HEK293 (cell line): ENCODE measurements at regions of chr19 and their contacts with region 1.

Region 1: DNA sequence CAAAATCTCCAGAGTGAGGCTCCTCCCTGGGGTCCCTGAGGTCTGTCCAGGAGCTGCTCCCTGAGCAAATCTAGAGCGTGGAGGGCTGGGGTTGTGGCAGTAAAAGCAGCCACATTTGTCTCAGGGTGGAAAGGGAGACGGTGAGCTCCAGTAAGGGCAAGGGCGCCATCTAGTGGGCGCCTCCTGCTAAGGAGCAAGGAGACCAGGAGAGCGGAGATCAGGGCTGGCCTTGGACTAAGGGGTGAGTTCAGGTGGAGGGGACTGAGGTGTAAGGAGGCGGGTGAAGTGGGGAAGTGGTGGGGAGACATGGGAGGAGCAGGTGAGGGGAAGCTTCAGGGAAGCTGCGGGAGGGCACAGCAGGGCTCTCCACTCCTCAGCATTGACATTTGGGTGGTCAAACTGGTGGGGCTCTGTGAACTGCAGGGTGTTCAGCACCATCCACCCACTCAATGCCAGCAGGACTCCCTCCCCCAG is 5.3 kb upstream of the CEACAM21 start:
- H3K4me3 ChIP-seq: no peak overlapping the region
- H3K27ac ChIP-seq: no peak overlapping the region
- H3K4me1 ChIP-seq: peaks cover 3% of the 10 kb centered on the region
- CTCF ChIP-seq: peak; percentile 99

Region 2: DNA sequence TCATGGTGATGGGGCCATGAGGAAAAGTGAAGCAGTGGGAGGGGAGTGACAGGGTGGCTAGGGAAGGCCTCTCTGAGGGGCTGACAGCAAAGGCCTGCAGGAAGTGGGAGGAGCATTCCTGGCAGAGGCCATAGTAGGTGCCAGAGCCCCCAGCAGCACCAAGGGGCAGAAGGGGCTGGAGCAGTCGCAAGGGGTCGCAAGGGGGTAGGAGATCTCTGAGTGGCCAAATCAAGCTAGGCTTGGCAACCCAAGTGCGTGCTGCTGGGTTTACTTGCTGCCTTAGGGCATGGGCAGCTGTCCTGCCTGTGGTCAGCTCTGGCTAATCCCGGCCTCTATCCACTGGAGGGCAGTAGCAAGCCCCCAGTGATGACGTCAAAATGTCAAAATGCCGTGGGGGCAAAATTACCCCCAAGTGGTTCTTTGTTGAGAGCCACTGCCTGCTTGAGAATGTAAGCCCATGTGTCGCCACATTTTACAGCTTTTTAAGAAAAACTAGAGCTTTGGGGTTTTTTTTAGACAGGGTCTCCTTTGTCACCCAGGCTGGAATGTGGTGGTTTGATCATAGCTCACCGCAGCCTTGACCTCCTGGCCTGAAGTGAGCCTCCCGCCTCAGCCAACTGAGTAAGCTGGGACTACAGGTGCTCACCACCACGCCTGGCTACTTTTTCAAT is 248.9 kb before region 1 on chr19:
- CTCF ChIA-PET with region 1: interaction called, 14 read pairs
- POLR2A ChIA-PET with region 1: no interaction called
- H3K4me3 ChIP-seq: no peak overlapping the region
- H3K27ac ChIP-seq: no peak overlapping the region
- H3K4me1 ChIP-seq: peaks cover 22% of the 10 kb centered on the region
- CTCF ChIP-seq: peak; percentile 76

Region 3: GRCh38 chr19:41457241-41457640 is 113.4 kb before region 1 on chr19:
- CTCF ChIA-PET with region 1: interaction called, 433 read pairs
- POLR2A ChIA-PET with region 1: no interaction called
- H3K4me3 ChIP-seq: no peak overlapping the region
- H3K27ac ChIP-seq: no peak overlapping the region
- H3K4me1 ChIP-seq: no peaks in the 10 kb centered on the region
- CTCF ChIP-seq: no peak

Region 4: GRCh38 chr19:41541990-41542584 is 28.6 kb before region 1 on chr19:
- CTCF ChIA-PET with region 1: interaction called, 11 read pairs
- POLR2A ChIA-PET with region 1: no interaction called
- H3K4me3 ChIP-seq: no peak overlapping the region
- H3K27ac ChIP-seq: no peak overlapping the region
- H3K4me1 ChIP-seq: no peaks in the 10 kb centered on the region
- CTCF ChIP-seq: 0 out of 2 replicates have a peak, but pooled peaks have one; percentile 25

Region 5: DNA sequence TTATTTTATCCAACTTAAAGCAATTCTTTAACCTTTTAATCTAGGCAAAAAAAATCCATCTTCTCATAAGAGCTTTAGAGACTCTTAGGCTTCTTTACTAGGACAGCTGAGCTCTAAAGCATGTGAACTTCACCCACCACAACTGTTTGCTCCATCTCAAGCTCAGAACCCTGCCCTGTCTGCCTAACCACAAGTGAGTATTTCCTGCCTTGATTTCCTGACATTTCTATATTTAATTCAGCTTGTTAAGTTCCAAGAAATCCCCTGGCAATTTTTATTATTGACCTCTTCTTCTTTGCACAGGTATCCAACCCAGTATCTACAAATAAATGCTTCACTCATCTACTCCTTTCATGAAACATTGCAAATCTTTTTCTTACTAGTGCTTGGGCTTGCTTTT is 15.8 kb before region 1 on chr19:
- CTCF ChIA-PET with region 1: interaction called, 138 read pairs
- POLR2A ChIA-PET with region 1: no interaction called
- H3K4me3 ChIP-seq: no peak overlapping the region
- H3K27ac ChIP-seq: no peak overlapping the region
- H3K4me1 ChIP-seq: peaks cover 2% of the 10 kb centered on the region; the same call in 1 of the 2 replicates
- CTCF ChIP-seq: no peak

Region 6: DNA sequence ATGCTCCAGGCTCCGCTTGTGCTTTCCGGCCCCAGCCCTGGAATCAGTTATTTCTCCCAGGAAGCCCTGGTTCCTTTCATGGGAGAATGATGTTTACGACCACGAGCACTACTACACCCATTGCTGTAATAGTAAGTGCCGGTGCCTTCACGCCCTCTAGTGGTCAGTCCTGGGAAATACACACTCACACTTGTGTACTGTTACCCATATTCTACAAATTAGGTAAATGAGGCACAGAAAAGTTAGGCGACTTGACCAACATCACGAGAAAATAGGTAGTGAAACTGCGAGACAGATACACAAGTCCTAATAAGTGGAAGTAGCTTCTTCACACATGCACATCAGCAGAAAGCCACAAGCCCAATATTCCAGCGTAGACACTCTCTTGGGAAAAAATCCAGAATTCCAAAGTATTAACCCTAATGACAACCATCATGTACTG is 26.9 kb after region 1 on chr19:
- CTCF ChIA-PET with region 1: interaction called, 59 read pairs
- POLR2A ChIA-PET with region 1: no interaction called
- H3K4me3 ChIP-seq: no peak overlapping the region
- H3K27ac ChIP-seq: no peak overlapping the region
- H3K4me1 ChIP-seq: peaks cover 10% of the 10 kb centered on the region
- CTCF ChIP-seq: peak; percentile 84